Activated CD4-positive, alpha-beta memory T cell treated with anti-CD3 and anti-CD28 coated beads, Interleukin-2, amount 10 ng/mL, durations not matched to agents 7 days and 5 days (primary cell): ENCODE measurements at regions of chr6 and their contacts with region 1.

Region 1: GRCh38 chr6:106141441-106142237 is 55.5 kb downstream of the PRDM1 start:
- DNase-seq: peak; percentile 67
- H3K4me3 Mint-ChIP-seq: peak overlapping the region; percentile 33
- H3K27ac Mint-ChIP-seq: peak overlapping the region; percentile 96
- H3K4me1 Mint-ChIP-seq: peaks cover 63% of the 10 kb centered on the region
- H3K27me3 Mint-ChIP-seq: no peaks in the 10 kb centered on the region

Region 2: GRCh38 chr6:106056060-106056745 is 85.4 kb before region 1 on chr6:
- CTCF ChIA-PET with region 1: no interaction called
- POLR2A ChIA-PET with region 1: no interaction called
- DNase-seq: no peak
- H3K4me3 Mint-ChIP-seq: peak overlapping the region; percentile 8
- H3K27ac Mint-ChIP-seq: peak overlapping the region; percentile 70
- H3K4me1 Mint-ChIP-seq: peaks cover 25% of the 10 kb centered on the region
- H3K27me3 Mint-ChIP-seq: peaks cover 2% of the 10 kb centered on the region

Region 3: GRCh38 chr6:106103728-106104109 is 37.9 kb before region 1 on chr6:
- CTCF ChIA-PET with region 1: interaction called, 7 read pairs
- POLR2A ChIA-PET with region 1: interaction called, 47 read pairs
- DNase-seq: peak; percentile 63
- H3K4me3 Mint-ChIP-seq: peak overlapping the region; percentile 87
- H3K27ac Mint-ChIP-seq: peak overlapping the region; percentile 97
- H3K4me1 Mint-ChIP-seq: peaks cover 76% of the 10 kb centered on the region
- H3K27me3 Mint-ChIP-seq: no peaks in the 10 kb centered on the region

Region 4: GRCh38 chr6:106114492-106115265 is 27.0 kb before region 1 on chr6:
- CTCF ChIA-PET with region 1: interaction called, 17 read pairs
- POLR2A ChIA-PET with region 1: interaction called, 37 read pairs
- DNase-seq: peak; percentile 77
- H3K4me3 Mint-ChIP-seq: peak overlapping the region; percentile 36
- H3K27ac Mint-ChIP-seq: peak overlapping the region; percentile 85
- H3K4me1 Mint-ChIP-seq: peaks cover 95% of the 10 kb centered on the region
- H3K27me3 Mint-ChIP-seq: peaks cover 5% of the 10 kb centered on the region

Region 5: GRCh38 chr6:106125925-106126435 is 15.7 kb before region 1 on chr6:
- CTCF ChIA-PET with region 1: interaction called, 3 read pairs
- POLR2A ChIA-PET with region 1: interaction called, 27 read pairs
- DNase-seq: peak; percentile 81
- H3K4me3 Mint-ChIP-seq: peak overlapping the region; percentile 63
- H3K27ac Mint-ChIP-seq: peak overlapping the region; percentile 79
- H3K4me1 Mint-ChIP-seq: peaks cover 55% of the 10 kb centered on the region
- H3K27me3 Mint-ChIP-seq: peaks cover 2% of the 10 kb centered on the region

Region 6: GRCh38 chr6:106181664-106182418 is 40.2 kb after region 1 on chr6:
- CTCF ChIA-PET with region 1: interaction called, 3 read pairs
- POLR2A ChIA-PET with region 1: interaction called, 17 read pairs
- DNase-seq: no peak
- H3K4me3 Mint-ChIP-seq: no peak overlapping the region
- H3K27ac Mint-ChIP-seq: peak overlapping the region; percentile 41
- H3K4me1 Mint-ChIP-seq: peaks cover 58% of the 10 kb centered on the region
- H3K27me3 Mint-ChIP-seq: peaks cover under 1% of the 10 kb centered on the region

Region 7: DNA sequence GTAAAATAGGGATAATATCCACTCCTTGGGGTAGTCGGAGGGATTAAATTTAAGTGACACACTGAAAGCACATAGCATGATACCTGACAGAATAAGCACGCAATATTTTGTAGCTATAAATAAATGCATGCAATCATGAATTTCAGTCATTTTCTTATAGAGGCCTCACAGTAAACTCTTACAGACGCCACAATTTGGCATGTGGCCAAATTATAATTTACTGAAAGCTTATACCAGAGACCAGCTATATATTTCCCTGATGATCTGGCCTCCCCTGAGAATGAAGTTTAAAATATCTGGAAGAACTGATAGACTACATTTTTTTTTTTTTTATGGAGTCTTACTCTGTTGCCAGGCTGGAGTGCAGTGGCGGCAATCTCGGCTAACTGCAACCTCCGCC is 528.6 kb after region 1 on chr6:
- CTCF ChIA-PET with region 1: no interaction called
- POLR2A ChIA-PET with region 1: no interaction called
- DNase-seq: no peak
- H3K4me3 Mint-ChIP-seq: no peak overlapping the region
- H3K27ac Mint-ChIP-seq: no peak overlapping the region
- H3K4me1 Mint-ChIP-seq: no peaks in the 10 kb centered on the region
- H3K27me3 Mint-ChIP-seq: no peaks in the 10 kb centered on the region